ENCODE measurements at regions of chr19 and their contacts with region 1.

Region 1: GRCh38 chr19:12965017-12965811 is 4.2 kb upstream of the DAND5 start:
- DNase-seq: peak; percentile 86
- ATAC-seq: peak; percentile 98
- H3K4me3 Mint-ChIP-seq: peak overlapping the region; percentile 91
- H3K27ac Mint-ChIP-seq: peak overlapping the region; percentile 96
- H3K4me1 Mint-ChIP-seq: peaks cover 7% of the 10 kb centered on the region
- H3K27me3 Mint-ChIP-seq: no peaks in the 10 kb centered on the region

Region 2: DNA sequence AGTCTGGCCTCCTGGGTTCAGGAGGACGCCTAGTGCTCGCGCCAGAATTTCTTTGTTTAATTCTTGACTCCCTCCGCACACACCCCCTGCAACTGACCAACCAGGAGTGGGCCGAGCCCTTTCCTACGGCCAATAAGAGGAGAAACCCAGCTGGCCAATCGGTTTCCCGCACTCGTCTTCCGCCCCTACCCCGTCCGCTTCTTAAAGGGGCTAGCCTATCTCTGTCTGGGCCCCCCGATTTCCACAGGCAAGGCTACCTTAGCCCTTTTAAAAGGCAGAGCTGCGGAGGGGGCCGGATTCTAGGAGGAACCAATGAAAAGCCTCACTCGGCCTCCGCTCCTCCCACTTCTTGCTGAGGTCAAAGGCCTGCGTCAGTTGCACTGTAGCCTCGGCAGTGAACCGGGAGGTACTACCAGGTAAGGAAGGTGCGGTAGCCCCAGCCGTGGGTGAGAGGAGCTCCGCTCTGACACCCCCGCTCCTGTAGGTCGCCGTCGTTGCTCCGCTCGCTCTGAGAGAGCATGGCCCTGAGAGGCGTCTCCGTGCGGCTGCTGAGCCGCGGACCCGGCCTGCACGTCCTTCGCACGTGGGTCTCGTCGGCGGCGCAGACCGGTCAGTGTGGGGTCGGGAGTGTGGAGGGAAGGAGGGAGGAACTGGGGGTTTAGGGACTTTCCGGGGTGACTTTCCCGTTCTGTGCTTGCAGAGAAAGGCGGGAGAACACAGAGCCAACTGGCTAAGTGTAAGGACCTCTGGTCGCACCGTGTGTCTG is 74.2 kb before region 1 on chr19 and contains the start of gene GCDH:
- CTCF ChIA-PET with region 1: interaction called, 121 read pairs
- POLR2A ChIA-PET with region 1: no interaction called
- DNase-seq: peak; percentile 99
- ATAC-seq: peak; percentile 96
- H3K4me3 Mint-ChIP-seq: peak within 1 kb of the TSS; percentile 95
- H3K27ac Mint-ChIP-seq: peak within 1 kb of the TSS; percentile 91
- H3K4me1 Mint-ChIP-seq: peaks cover 35% of the 10 kb centered on the region
- H3K27me3 Mint-ChIP-seq: peaks cover 3% of the 10 kb centered on the region
- total RNA-seq, gene GCDH: 39.5 to 42.5 TPM

Region 3: DNA sequence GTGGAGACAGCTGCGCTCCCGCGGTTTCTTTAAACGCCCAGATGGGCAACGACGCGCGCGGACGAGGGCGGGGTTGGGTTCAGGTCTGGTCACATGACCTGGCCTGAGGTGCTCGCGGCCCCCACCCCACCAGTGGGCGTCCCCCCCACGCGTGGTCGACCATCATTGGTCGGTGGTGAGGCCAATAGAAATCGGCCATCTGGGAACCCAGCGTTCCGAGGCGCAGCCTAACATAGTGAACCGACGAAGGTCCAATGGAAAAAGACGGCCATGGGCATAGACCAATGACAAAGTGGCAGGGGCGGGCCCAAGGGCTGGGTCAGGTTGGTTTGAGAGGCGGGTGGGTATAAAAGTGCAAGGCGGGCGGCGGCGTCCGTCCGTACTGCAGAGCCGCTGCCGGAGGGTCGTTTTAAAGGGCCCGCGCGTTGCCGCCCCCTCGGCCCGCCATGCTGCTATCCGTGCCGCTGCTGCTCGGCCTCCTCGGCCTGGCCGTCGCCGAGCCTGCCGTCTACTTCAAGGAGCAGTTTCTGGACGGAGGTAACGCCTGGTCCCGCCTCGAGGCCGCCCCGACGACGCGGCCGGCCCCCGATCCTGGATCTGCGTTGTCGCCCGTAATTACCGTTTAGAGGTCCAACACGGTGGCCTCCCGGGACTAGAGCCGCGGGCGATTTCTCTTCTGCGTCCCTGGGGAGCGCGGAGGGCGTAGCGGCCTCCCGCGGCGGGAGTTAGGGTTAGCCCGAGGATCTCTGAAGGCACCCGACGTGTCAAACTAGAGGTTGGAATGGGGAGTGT is 26.8 kb before region 1 on chr19 and contains the start of gene CALR:
- CTCF ChIA-PET with region 1: interaction called, 18 read pairs
- POLR2A ChIA-PET with region 1: interaction called, 3 read pairs
- DNase-seq: peak; percentile 100
- ATAC-seq: peak; percentile 91
- H3K4me3 Mint-ChIP-seq: peak within 1 kb of the TSS; percentile 99
- H3K27ac Mint-ChIP-seq: peak within 1 kb of the TSS; percentile 97
- H3K4me1 Mint-ChIP-seq: peaks cover 63% of the 10 kb centered on the region
- H3K27me3 Mint-ChIP-seq: no peaks in the 10 kb centered on the region
- total RNA-seq, gene CALR: 875 to 886 TPM

Region 4: DNA sequence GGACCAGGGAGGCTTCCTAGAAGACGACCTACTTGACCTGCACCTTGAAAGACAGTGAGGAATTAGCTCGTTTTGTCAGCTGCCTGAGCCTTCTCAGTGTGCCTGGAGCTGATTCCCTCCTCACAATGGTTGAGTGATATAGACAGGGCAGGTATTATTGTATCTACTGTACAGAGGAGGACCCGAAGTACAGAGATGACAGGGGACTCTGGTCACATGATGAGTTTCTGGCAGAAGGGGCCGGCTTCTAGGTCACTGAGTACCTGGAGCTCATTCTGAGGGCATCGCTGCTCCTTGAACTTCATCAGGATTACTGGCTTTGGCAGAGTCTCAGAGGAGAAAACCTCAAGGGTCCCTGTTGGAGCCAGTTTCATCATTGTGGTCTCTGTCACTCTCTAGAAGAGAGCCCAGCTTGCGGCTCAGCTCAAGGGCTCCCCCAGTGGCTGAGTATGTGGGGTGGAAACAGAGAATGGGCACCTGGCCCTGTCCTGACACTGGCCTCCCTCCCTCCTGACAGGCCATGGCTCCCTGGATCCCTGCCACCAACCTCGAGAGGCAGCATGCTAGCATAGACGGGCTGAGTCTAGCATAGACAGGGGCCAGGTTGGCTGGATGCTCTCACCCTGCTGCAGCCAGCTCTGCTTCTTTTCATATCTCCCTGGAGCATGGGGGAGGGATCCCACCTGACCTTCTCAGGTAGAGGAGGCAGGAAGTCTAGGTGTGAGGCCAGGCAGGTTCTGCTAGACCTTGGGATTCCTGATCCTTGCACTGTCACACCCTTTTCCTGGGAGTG is 68.8 kb after region 1 on chr19:
- CTCF ChIA-PET with region 1: interaction called, 20 read pairs
- POLR2A ChIA-PET with region 1: interaction called, 3 read pairs
- DNase-seq: peak; percentile 59
- ATAC-seq: peak; percentile 86
- H3K4me3 Mint-ChIP-seq: no peak overlapping the region
- H3K27ac Mint-ChIP-seq: no peak overlapping the region
- H3K4me1 Mint-ChIP-seq: peaks cover 4% of the 10 kb centered on the region
- H3K27me3 Mint-ChIP-seq: no peaks in the 10 kb centered on the region

Region 5: DNA sequence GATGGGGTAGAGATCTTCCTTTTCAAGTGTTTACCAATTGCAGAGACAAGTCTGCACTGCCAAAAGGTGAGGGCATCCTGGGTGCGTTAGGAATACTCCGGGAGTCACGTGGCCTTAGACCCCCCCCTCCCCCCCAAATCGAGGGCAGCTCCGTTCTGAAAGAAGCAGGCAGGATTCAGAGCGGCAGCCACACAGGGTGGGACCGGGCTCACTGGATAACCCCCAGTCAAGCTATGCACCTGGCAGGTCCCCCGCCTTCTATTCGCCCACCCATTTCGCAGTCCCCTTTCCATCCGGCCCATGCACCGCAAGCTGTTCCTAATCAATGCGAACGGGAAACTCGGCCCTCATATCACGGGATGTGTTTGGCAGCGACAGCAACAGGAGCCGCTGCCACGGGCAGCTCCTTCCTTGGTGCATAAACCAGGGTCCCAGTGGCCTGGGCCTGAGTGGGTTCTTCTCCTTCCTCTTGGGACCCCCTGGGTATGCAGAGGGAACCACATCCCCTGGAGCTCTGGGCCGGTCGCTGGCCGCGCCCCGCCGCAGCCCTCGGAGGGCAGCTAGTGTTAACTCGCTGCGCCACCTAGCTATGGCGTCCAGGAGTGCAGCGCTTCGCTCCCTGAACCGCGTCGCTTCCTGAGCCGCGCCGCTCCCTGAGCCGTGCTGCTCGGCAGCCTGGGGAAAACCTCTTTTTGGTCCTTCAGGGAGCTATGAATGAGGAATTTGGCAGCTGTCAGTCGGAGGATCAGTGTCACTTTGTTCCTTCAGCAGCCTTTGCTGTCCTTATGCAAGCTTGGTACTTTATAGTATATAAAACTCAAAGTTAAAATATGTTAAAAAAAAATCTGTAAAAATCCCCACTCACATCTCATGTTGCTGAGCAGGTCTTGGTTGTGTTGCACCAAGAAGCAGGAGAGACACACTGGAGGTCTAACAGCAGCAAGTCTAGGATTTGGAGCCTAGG is 96.0 kb after region 1 on chr19:
- CTCF ChIA-PET with region 1: interaction called, 47 read pairs
- POLR2A ChIA-PET with region 1: interaction called, 4 read pairs
- DNase-seq: peak; percentile 85
- ATAC-seq: peak; percentile 98
- H3K4me3 Mint-ChIP-seq: peak overlapping the region; percentile 68
- H3K27ac Mint-ChIP-seq: no peak overlapping the region
- H3K4me1 Mint-ChIP-seq: peaks cover 9% of the 10 kb centered on the region
- H3K27me3 Mint-ChIP-seq: peaks cover 24% of the 10 kb centered on the region

Region 6: GRCh38 chr19:13099073-13099999 is 134.1 kb after region 1 on chr19:
- CTCF ChIA-PET with region 1: interaction called, 56 read pairs
- POLR2A ChIA-PET with region 1: interaction called, 5 read pairs
- DNase-seq: peak; percentile 87
- ATAC-seq: peak; percentile 64
- H3K4me3 Mint-ChIP-seq: peak overlapping the region; percentile 63
- H3K27ac Mint-ChIP-seq: peak overlapping the region; percentile 91
- H3K4me1 Mint-ChIP-seq: peaks cover 58% of the 10 kb centered on the region
- H3K27me3 Mint-ChIP-seq: peaks cover 36% of the 10 kb centered on the region

Measured in activated CD8-positive, alpha-beta T cell treated with anti-CD3 and anti-CD28 coated beads, Interleukin-2, amount 10 ng/mL, durations not matched to agents 7 days and 5 days (primary cell).